Natural killer cell (primary cell): ENCODE measurements at regions of chr3 and their contacts with region 1.

Region 1: DNA sequence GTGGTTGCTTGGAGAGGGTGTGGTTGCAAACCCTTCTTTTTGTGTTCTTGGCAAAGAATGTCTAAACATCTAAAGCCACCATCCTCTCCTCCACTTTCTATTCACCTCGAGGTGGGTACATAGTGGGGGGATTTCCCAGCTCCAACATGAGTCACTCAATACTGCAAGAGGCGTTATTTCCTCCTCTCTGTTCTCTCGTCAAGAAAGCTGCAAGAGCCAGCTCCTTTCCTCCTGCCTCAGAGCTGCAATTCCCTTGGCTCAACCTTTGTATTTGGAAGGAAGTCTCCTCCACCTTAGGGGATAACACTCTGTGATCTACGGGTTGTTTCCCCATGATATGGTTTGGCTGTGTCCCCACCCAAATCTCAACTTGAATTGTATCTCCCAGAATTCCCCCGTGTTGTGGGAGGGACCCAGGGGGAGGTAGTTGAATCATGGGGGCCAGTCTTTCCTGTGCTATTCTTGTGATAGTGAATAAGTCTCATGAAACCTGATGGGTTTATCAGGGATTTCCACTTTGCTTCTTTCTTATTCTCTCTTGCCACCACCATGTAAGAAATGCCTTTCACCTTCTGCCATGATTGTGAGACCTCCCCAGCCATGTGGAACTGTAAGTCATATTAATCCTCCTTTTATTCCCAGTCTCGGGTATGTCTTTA is 138.4 kb downstream of the PLCL2 start:
- DNase-seq: peak; percentile 45 to 80
- ATAC-seq: peak; percentile 84 to 93 (median 92)
- H3K4me3 ChIP-seq: no peak overlapping the region
- H3K4me3 Mint-ChIP-seq: peak overlapping the region; percentile 52
- H3K27ac ChIP-seq: peak overlapping the region; percentile 42
- H3K27ac Mint-ChIP-seq: peak overlapping the region; percentile 86 to 99
- H3K4me1 ChIP-seq: peaks cover 24% of the 10 kb centered on the region
- H3K4me1 Mint-ChIP-seq: peaks cover 66 to 67% of the 10 kb centered on the region in 2 donors
- H3K27me3 ChIP-seq: no peaks in the 10 kb centered on the region
- H3K27me3 Mint-ChIP-seq: no peaks in the 10 kb centered on the region
- CTCF ChIP-seq: no peak

Region 2: DNA sequence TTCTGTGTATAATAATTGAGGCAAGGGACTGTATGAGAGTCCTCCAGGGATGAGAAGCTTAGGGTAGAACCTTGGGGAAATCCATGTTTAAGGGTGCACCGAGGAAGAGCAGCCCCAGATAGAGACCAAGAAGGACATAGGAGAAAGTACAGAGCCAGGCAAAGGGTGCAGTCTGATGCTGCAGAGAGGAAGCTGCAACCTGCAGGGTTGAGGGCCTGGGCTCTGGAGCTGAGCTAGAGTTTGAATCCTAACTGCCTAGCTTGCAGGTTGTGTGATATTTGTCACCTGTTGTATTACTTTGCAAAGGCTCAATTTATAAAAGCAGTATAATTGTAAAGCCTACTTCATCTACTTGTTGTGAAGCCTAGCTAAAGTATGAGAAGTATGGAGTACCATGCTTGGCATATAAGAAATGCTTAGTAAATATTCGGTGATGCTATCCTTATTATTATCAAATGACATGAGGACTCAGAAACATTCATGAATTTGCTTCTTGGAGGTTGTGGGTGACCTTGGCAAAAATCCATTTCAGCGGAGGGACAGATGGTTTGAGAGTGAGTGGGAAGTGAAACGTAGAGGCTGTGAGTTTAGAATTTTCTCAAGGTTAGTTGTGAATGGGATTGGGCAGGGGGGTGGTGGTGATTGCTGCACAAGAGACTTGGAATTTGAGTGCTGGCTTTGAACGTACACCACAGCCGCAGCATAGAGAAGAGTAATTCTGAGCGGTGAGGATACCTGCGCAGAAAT is 94.6 kb before region 1 on chr3:
- intact Hi-C with region 1: no loop called
- DNase-seq: no peak
- ATAC-seq: peak in 2 of 3 donors; percentile 36 to 39
- H3K4me3 ChIP-seq: no peak overlapping the region
- H3K4me3 Mint-ChIP-seq: no peak overlapping the region
- H3K27ac ChIP-seq: no peak overlapping the region
- H3K27ac Mint-ChIP-seq: peak overlapping the region; percentile 1 to 41
- H3K4me1 ChIP-seq: peaks cover 29% of the 10 kb centered on the region
- H3K4me1 Mint-ChIP-seq: peaks cover 78 to 84% of the 10 kb centered on the region in 2 donors
- H3K27me3 ChIP-seq: no peaks in the 10 kb centered on the region
- H3K27me3 Mint-ChIP-seq: no peaks in the 10 kb centered on the region
- CTCF ChIP-seq: no peak

Region 3: DNA sequence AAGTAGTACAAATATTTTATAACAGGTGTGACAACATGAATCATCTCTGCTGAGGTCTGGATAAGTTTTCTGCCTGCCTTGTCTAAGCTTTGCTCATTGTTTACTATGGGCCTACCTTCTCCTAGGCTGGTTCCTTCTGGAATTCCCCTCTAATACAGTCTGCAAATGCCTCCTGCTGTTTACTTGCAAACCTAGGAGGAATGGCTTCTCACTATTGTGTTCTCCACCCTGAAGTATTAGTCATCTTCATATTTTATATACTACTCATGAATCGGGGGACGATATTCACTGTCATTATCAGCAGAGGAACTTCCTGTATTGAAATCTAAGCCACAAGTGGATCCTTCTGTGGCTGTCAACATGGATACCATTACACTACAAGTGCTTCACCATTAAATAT is 16.4 kb after region 1 on chr3:
- intact Hi-C with region 1: loop called (anchors 1 kb)
- DNase-seq: peak in 1 of 2 donors; percentile 28
- ATAC-seq: peak; percentile 57 to 84 (median 67)
- H3K4me3 ChIP-seq: no peak overlapping the region
- H3K4me3 Mint-ChIP-seq: no peak overlapping the region
- H3K27ac ChIP-seq: peak overlapping the region; percentile 21
- H3K27ac Mint-ChIP-seq: peak overlapping the region; percentile 79 to 86
- H3K4me1 ChIP-seq: peaks cover 7% of the 10 kb centered on the region
- H3K4me1 Mint-ChIP-seq: peaks cover 48 to 53% of the 10 kb centered on the region in 2 donors
- H3K27me3 ChIP-seq: no peaks in the 10 kb centered on the region
- H3K27me3 Mint-ChIP-seq: no peaks in the 10 kb centered on the region
- CTCF ChIP-seq: no peak

Region 4: DNA sequence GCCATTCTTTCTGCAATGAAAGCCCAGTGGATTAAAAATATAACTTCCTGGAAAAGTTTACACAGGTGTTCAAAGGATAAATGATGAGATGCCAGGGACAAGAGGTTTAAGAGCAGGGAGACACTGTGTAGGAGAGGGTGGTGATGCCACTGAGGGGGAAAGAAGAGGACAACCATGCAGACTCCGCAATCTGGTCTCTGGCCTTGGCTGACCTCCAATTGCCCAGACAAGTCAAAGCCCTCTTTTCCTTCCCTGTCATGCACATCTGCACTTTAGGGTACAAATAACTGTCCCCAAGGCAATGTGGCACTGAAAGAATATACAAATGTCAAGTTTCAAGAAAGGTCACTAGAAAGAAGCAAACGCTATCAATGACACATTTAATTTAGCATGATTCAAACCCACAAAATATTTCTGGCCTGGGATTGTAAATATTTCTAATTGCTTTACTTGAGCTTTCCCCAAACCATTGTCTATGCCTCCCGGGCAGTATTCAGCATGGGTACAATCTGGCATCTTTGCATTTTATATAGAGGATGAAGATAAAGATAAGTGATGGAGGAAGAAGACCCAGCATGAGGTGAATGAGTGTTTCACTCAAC is 181.0 kb after region 1 on chr3:
- intact Hi-C with region 1: no loop called
- DNase-seq: no peak
- ATAC-seq: no peak
- H3K4me3 ChIP-seq: no peak overlapping the region
- H3K4me3 Mint-ChIP-seq: no peak overlapping the region
- H3K27ac ChIP-seq: no peak overlapping the region
- H3K27ac Mint-ChIP-seq: no peak overlapping the region
- H3K4me1 ChIP-seq: no peaks in the 10 kb centered on the region
- H3K4me1 Mint-ChIP-seq: peaks cover 5 to 6% of the 10 kb centered on the region in 2 donors
- H3K27me3 ChIP-seq: no peaks in the 10 kb centered on the region
- H3K27me3 Mint-ChIP-seq: no peaks in the 10 kb centered on the region
- CTCF ChIP-seq: no peak